Naive thymus-derived CD4-positive, alpha-beta T cell (primary cell): ENCODE measurements at regions of chr1 and their contacts with region 1.

Region 1: DNA sequence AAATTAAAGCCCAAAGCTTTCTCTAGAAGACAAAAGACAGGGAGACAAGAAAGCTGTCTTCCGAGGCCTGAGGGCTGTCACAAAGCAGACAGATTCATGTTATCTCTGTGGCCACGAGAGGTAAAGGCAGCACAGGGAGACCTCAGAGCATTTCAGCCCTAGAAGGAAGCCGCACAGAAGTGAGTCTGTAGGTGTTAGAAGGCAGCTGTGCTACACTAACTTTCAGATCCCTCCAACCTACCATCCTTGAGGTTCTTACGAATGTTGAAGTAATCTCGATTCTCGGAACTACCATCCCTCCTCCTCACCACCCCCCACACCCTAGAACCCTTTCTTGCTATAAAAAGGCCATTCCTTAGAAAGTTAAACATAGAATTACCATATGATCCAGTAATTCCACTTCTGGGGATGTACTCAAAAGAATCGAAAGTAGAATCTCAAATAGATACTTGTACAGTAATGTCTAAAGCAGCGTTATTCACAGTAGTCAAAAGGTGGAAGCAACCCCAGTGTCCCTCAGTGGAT is 21.5 kb upstream of the LYST start:
- DNase-seq: peak in 8 of 9 donors; percentile 9 to 54 (median 36)
- ATAC-seq: peak; percentile 90
- H3K4me3 ChIP-seq: peak overlapping the region; percentile 6
- H3K4me3 Mint-ChIP-seq: peak overlapping the region; percentile 49 to 89 (median 84)
- H3K27ac ChIP-seq: peak overlapping the region; percentile 70
- H3K27ac Mint-ChIP-seq: peak overlapping the region; percentile 86 to 98 (median 95)
- H3K4me1 ChIP-seq: peaks cover 0 to 22% of the 10 kb centered on the region in 2 donors
- H3K4me1 Mint-ChIP-seq: peaks cover 8 to 50% (median 21%) of the 10 kb centered on the region in 7 donors
- H3K27me3 ChIP-seq: no peaks in the 10 kb centered on the region
- H3K27me3 Mint-ChIP-seq: no peaks in the 10 kb centered on the region

Region 2: GRCh38 chr1:235739124-235739523 is 149.1 kb before region 1 on chr1:
- CTCF ChIA-PET with region 1: no interaction called
- POLR2A ChIA-PET with region 1: no interaction called
- intact Hi-C with region 1: no loop called
- DNase-seq: no peak
- ATAC-seq: no peak
- H3K4me3 ChIP-seq: no peak overlapping the region
- H3K4me3 Mint-ChIP-seq: no peak overlapping the region
- H3K27ac ChIP-seq: no peak overlapping the region
- H3K27ac Mint-ChIP-seq: no peak overlapping the region
- H3K4me1 ChIP-seq: no peaks in the 10 kb centered on the region
- H3K4me1 Mint-ChIP-seq: peaks cover 0 to 6% (median 0%) of the 10 kb centered on the region in 7 donors
- H3K27me3 ChIP-seq: no peaks in the 10 kb centered on the region
- H3K27me3 Mint-ChIP-seq: no peaks in the 10 kb centered on the region

Region 3: DNA sequence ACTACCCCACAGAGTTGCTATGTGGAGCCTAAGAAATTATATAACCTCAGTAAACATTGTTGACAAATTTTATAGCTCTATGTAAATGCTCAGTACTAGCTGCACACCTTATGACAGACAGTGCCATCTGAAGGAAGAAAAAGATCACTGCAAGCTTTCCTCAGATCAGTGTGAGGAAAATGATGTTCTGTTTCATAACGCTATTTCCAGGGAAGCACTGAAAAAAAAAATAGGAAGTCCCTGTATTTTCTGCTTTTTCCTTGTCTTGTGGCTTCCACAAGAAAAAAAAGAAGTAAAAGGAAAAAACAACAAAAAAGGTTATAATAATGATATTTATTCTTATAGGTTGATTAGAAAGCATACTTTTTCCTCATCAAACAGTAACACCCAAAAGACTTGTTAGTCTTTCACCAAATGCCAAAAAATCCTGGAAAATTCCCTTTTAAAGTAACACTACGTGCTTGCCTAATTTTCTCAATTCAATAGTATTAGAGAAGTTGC is 44.7 kb before region 1 on chr1:
- CTCF ChIA-PET with region 1: interaction called, 5 read pairs
- POLR2A ChIA-PET with region 1: no interaction called
- intact Hi-C with region 1: loop called in 1 of 2 experiments (anchors 1 kb)
- DNase-seq: peak in 3 of 9 donors; percentile 16 to 28 (median 28)
- ATAC-seq: peak; percentile 89
- H3K4me3 ChIP-seq: no peak overlapping the region
- H3K4me3 Mint-ChIP-seq: no peak overlapping the region
- H3K27ac ChIP-seq: no peak overlapping the region
- H3K27ac Mint-ChIP-seq: peak overlapping the region in 1 of 9 donors; percentile 33
- H3K4me1 ChIP-seq: peaks cover 11 to 20% of the 10 kb centered on the region in 2 donors
- H3K4me1 Mint-ChIP-seq: peaks cover 35 to 75% (median 58%) of the 10 kb centered on the region in 7 donors
- H3K27me3 ChIP-seq: no peaks in the 10 kb centered on the region
- H3K27me3 Mint-ChIP-seq: no peaks in the 10 kb centered on the region

Region 4: GRCh38 chr1:235876402-235877097 is 11.6 kb before region 1 on chr1:
- CTCF ChIA-PET with region 1: no interaction called
- POLR2A ChIA-PET with region 1: interaction called, 3 read pairs
- intact Hi-C with region 1: loop called in 1 of 2 experiments (anchors 1 kb)
- DNase-seq: peak in 1 of 9 donors; percentile 25
- ATAC-seq: peak; percentile 46
- H3K4me3 ChIP-seq: no peak overlapping the region
- H3K4me3 Mint-ChIP-seq: peak overlapping the region in 5 of 10 donors; percentile 12 to 66 (median 26)
- H3K27ac ChIP-seq: no peak overlapping the region
- H3K27ac Mint-ChIP-seq: peak overlapping the region in 6 of 9 donors; percentile 9 to 90 (median 63)
- H3K4me1 ChIP-seq: peaks cover 15 to 18% of the 10 kb centered on the region in 2 donors
- H3K4me1 Mint-ChIP-seq: peaks cover 9 to 75% (median 25%) of the 10 kb centered on the region in 7 donors
- H3K27me3 ChIP-seq: no peaks in the 10 kb centered on the region
- H3K27me3 Mint-ChIP-seq: peaks cover 0 to 3% (median 0%) of the 10 kb centered on the region in 5 donors

Region 5: GRCh38 chr1:235910357-235911299 is 22.4 kb after region 1 on chr1:
- CTCF ChIA-PET with region 1: no interaction called
- POLR2A ChIA-PET with region 1: no interaction called
- intact Hi-C with region 1: loop called in 1 of 2 experiments (anchors 2 kb)
- DNase-seq: peak in 1 of 9 donors; percentile 34
- ATAC-seq: peak; percentile 62
- H3K4me3 ChIP-seq: no peak overlapping the region
- H3K4me3 Mint-ChIP-seq: no peak overlapping the region
- H3K27ac ChIP-seq: no peak overlapping the region
- H3K27ac Mint-ChIP-seq: no peak overlapping the region
- H3K4me1 ChIP-seq: no peaks in the 10 kb centered on the region
- H3K4me1 Mint-ChIP-seq: peaks cover 0 to 19% (median 0%) of the 10 kb centered on the region in 7 donors
- H3K27me3 ChIP-seq: no peaks in the 10 kb centered on the region
- H3K27me3 Mint-ChIP-seq: peaks cover 0 to 2% (median 0%) of the 10 kb centered on the region in 5 donors

Region 6: DNA sequence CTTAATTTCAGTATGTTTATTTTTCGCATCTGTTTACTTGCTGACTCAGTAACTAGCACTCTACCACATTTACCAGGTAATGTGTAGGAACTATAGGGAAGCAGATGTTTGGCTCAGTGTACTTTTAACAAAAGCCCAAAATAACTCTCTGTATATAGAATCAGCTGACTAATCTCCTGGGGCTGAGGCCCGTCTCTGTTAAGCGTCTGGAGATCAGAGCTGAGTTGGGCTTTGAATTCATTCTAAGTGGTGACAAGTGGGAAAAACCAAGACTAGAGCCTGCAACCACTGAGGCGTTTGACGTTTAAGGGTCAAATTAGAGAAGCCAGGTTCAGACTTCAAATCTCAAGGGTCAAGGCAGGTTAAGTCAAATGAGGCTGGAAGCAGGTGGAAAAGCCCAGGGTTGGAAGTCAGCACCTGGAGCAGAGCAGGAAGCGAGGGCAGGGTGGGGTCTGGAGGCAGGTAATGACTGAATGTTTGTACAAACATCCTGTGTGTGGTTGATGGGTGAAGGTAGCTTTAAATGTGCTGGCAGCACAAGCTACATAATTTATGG is 35.4 kb after region 1 on chr1:
- CTCF ChIA-PET with region 1: no interaction called
- POLR2A ChIA-PET with region 1: no interaction called
- intact Hi-C with region 1: loop called in 1 of 2 experiments (anchors 5 kb)
- DNase-seq: peak in 5 of 9 donors; percentile 8 to 40 (median 26)
- ATAC-seq: peak; percentile 63
- H3K4me3 ChIP-seq: no peak overlapping the region
- H3K4me3 Mint-ChIP-seq: peak overlapping the region in 8 of 10 donors; percentile 6 to 69 (median 54)
- H3K27ac ChIP-seq: no peak overlapping the region
- H3K27ac Mint-ChIP-seq: peak overlapping the region; percentile 20 to 88 (median 55)
- H3K4me1 ChIP-seq: peaks cover 12 to 19% of the 10 kb centered on the region in 2 donors
- H3K4me1 Mint-ChIP-seq: peaks cover 18 to 41% (median 26%) of the 10 kb centered on the region in 7 donors
- H3K27me3 ChIP-seq: no peaks in the 10 kb centered on the region
- H3K27me3 Mint-ChIP-seq: peaks cover 0 to 12% (median 0%) of the 10 kb centered on the region in 5 donors

Region 7: DNA sequence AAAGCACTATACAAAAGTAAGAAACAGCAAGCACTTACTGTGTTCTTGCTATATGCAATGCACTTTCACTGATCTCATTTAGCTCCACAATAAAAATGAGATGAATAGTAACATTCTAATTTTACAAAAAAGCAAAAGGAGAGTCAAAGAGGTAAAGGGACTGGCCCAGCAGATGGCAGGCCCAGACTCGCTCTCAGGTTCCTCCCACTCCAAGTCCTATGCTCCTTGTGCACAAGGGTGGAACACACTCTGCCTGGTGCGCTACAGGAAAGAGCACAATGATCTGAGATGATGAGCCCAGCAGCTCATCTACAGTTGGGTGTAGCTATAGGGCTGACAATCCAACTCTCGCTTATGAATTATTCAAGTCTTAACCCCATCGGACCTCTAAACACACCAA is 72.6 kb after region 1 on chr1:
- CTCF ChIA-PET with region 1: no interaction called
- POLR2A ChIA-PET with region 1: no interaction called
- intact Hi-C with region 1: no loop called
- DNase-seq: no peak
- ATAC-seq: no peak
- H3K4me3 ChIP-seq: no peak overlapping the region
- H3K4me3 Mint-ChIP-seq: no peak overlapping the region
- H3K27ac ChIP-seq: no peak overlapping the region
- H3K27ac Mint-ChIP-seq: no peak overlapping the region
- H3K4me1 ChIP-seq: peaks cover under 1 to 3% of the 10 kb centered on the region in 2 donors
- H3K4me1 Mint-ChIP-seq: peaks cover 7 to 20% (median 18%) of the 10 kb centered on the region in 7 donors
- H3K27me3 ChIP-seq: no peaks in the 10 kb centered on the region
- H3K27me3 Mint-ChIP-seq: peaks cover 0 to 24% (median 0%) of the 10 kb centered on the region in 5 donors

Region 8: DNA sequence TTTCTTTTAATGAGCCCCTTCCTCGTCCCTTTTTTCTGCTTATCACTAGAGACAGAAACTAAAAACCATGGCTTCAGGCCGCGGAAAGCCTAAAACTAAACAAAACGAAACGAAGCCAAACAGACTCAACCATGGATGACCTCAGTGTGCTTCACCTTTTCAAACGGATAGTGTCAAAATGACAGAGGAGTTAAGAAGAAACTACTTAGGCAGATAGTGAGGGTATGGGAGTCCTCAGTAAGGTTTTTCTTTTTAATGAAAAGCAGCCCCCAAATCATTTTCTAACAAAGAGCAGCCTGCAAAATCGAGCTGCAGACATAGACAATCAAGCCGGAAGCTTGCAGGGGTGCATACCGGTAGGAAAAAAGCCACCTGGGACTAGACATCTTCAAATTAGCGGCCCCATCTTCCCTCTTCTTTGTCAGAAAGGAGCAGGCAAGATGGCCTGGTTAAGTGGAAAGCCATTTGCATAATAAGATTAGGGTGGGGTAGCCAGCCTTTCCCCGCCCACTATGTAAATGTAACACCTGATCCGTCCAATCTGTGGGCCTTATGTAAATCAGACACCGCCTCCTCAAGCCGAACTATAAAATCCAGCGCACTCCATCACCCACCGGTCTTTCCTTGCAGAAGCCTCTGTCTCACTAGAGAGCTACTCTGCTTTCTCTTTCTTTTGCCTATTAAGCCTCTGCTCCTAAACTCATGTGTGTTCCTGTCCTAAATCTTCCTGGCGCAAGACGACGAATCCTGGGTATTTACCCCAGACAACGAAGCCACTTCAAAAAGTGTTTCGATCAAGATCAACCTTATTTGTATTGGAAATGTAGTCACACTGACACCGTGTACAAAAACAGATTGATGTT is 399.8 kb after region 1 on chr1:
- CTCF ChIA-PET with region 1: no interaction called
- POLR2A ChIA-PET with region 1: no interaction called
- intact Hi-C with region 1: no loop called
- DNase-seq: no peak
- ATAC-seq: no peak
- H3K4me3 ChIP-seq: no peak overlapping the region
- H3K4me3 Mint-ChIP-seq: no peak overlapping the region
- H3K27ac ChIP-seq: no peak overlapping the region
- H3K27ac Mint-ChIP-seq: peak overlapping the region in 1 of 9 donors; percentile 19
- H3K4me1 ChIP-seq: peaks cover 0 to 18% of the 10 kb centered on the region in 2 donors
- H3K4me1 Mint-ChIP-seq: peaks cover 16 to 36% (median 25%) of the 10 kb centered on the region in 7 donors
- H3K27me3 ChIP-seq: no peaks in the 10 kb centered on the region
- H3K27me3 Mint-ChIP-seq: peaks cover 0 to 14% (median 0%) of the 10 kb centered on the region in 5 donors